ENCODE measurements at regions of chr6 and their contacts with region 1.

Region 1: GRCh38 chr6:33375143-33375671 is 16.4 kb upstream of the KIFC1 start:
- DNase-seq: peak; percentile 96
- H3K4me3 Mint-ChIP-seq: peak overlapping the region; percentile 56
- H3K27ac Mint-ChIP-seq: peak overlapping the region; percentile 71
- H3K4me1 Mint-ChIP-seq: peaks cover 16% of the 10 kb centered on the region
- H3K27me3 Mint-ChIP-seq: no peaks in the 10 kb centered on the region
- CTCF ChIP-seq: no peak

Region 2: DNA sequence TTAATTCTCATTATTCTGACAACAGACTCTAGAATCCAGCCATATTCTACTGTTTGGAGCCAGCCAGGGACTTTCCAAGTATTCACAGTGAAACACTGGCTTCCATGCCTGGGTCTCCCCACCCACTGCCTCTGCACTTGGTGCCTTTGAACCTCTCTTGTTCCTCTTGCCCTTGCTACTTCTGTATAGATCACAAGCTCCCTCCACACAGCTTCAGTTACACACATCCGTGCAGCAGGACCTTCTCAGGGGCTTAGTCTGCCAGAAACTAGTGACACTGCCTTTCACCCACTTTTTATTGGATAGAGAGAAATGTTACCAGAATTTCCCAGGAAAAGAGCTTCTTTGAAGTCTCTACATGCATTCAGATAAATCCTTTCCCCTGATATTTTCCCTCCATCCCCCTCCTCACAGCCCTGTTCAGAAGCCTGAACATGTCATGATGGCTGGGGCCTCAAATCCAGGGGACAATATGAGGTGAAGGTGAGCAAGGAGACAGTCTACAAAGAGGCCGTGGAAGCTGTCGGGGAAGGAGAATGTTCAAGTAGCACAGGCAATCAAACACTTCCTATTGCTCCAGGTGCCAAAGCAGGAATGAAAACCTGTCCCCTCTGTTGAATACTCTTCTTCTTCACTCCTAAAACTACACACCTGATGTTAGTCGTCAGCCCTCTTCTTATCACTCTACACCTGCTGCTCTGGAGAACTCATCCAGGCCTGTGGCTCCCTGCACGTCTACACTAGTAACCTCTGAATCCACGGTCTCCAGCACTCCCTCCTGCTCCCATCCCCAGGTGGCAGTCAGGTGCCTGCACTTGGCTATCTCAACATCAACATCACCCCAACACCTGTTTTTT is 345.7 kb before region 1 on chr6:
- CTCF ChIA-PET with region 1: no interaction called
- POLR2A ChIA-PET with region 1: no interaction called
- intact Hi-C with region 1: no loop called
- DNase-seq: no peak
- H3K4me3 Mint-ChIP-seq: no peak overlapping the region
- H3K27ac Mint-ChIP-seq: no peak overlapping the region
- H3K4me1 Mint-ChIP-seq: no peaks in the 10 kb centered on the region
- H3K27me3 Mint-ChIP-seq: peaks cover 94% of the 10 kb centered on the region
- CTCF ChIP-seq: no peak

Region 3: GRCh38 chr6:33317669-33318425 is 57.4 kb before region 1 on chr6 and contains the start of gene ZBTB22:
- CTCF ChIA-PET with region 1: interaction called, 4 read pairs
- POLR2A ChIA-PET with region 1: interaction called, 21 read pairs
- intact Hi-C with region 1: no loop called
- DNase-seq: peak; percentile 100
- H3K4me3 Mint-ChIP-seq: peak within 1 kb of the TSS; percentile 81
- H3K27ac Mint-ChIP-seq: peak within 1 kb of the TSS; percentile 80
- H3K4me1 Mint-ChIP-seq: peaks cover 66% of the 10 kb centered on the region
- H3K27me3 Mint-ChIP-seq: no peaks in the 10 kb centered on the region
- CTCF ChIP-seq: no peak
- total RNA-seq, gene ZBTB22: 12.3 and 15.5 TPM in 2 replicates